ENCODE measurements at regions of chr20 and their contacts with region 1.

Region 1: DNA sequence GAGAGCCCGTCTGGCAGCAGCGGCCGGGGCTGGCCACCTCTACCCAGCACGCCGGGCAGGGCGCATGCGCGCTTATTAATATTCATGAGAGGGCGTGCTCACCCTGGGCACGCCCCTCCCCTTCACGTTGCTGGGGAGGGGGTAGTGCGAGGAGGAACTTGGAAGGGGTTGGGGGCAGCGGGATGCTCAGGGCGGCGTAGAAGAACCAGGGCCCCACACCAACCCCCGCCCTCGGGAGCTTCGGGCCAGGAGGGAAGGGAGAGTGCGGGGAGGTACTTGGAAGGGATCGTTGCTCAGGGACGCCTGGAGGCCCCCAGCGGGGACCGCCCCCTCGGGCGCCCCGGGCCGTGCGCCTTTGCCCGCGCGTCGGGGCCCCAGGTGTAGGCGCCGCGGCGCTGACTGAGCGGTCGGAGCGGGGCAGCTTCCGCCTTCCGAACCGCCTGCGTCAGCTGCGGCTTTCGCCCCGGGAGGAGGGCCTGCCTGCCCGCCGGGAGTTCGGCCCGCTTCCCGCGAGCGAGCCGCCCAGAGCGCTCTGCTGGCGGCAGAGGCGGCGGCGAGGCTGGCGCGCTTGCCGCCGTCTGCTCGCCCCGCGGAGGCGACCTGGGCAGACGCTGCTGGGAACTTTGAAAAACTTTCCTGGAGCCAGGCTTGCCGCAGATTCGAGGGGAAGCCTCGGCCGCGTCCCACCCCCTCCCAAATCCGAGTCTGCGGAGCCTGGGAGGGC is at the start of gene JAG1:
- DNase-seq: peak; percentile 95

Region 2: GRCh38 chr20:10469599-10469998 is 204.6 kb before region 1 on chr20:
- in situ Hi-C with region 1: loop called (anchors 25 kb)
- DNase-seq: peak; percentile 75

Region 3: DNA sequence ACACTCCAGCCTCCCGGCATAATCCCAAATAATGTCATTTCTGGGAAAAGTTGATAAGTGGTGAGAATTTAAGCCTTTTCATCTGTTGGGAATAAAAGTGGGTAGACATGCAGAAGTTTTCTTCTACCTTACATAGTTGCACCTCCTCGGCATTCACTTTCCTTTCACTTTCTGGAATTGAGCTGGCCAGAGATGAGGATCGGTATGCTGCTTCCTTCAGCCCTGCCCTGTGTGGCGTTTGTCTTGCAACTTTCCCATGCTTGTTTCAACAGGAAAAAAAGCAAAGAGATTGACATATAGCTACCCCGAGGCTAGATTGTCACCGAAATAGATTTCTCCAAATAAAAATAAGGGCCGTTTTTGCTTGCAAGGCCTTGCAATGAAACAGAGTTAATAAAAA is 65.4 kb after region 1 on chr20:
- in situ Hi-C with region 1: no loop called
- DNase-seq: no peak

Measured in KBM-7 (cell line).